ENCODE measurements at regions of chr12 and their contacts with region 1.

Region 1: GRCh38 chr12:49358483-49359141 is 8.7 kb upstream of the SPATS2 start:
- DNase-seq: peak; percentile 67
- H3K4me3 ChIP-seq: no peak overlapping the region
- H3K27ac ChIP-seq: no peak overlapping the region
- H3K4me1 ChIP-seq: no peaks in the 10 kb centered on the region
- H3K27me3 ChIP-seq: no peaks in the 10 kb centered on the region
- CTCF ChIP-seq: peak; percentile 70

Region 2: GRCh38 chr12:48973941-48974673 is 384.5 kb before region 1 on chr12:
- intact Hi-C with region 1: no loop called
- DNase-seq: peak; percentile 62
- H3K4me3 ChIP-seq: no peak overlapping the region
- H3K27ac ChIP-seq: no peak overlapping the region
- H3K4me1 ChIP-seq: peaks cover 29% of the 10 kb centered on the region
- H3K27me3 ChIP-seq: peaks cover 70% of the 10 kb centered on the region
- CTCF ChIP-seq: peak; percentile 61

Region 3: GRCh38 chr12:49515266-49515665 is 156.7 kb after region 1 on chr12:
- intact Hi-C with region 1: loop called (anchors 2 kb)
- DNase-seq: no peak
- H3K4me3 ChIP-seq: no peak overlapping the region
- H3K27ac ChIP-seq: no peak overlapping the region
- H3K4me1 ChIP-seq: no peaks in the 10 kb centered on the region
- H3K27me3 ChIP-seq: no peaks in the 10 kb centered on the region
- CTCF ChIP-seq: no peak

Region 4: GRCh38 chr12:49580572-49581535 is 222.2 kb after region 1 on chr12:
- intact Hi-C with region 1: loop called (anchors 10 kb)
- DNase-seq: peak; percentile 75
- H3K4me3 ChIP-seq: no peak overlapping the region
- H3K27ac ChIP-seq: no peak overlapping the region
- H3K4me1 ChIP-seq: no peaks in the 10 kb centered on the region
- H3K27me3 ChIP-seq: no peaks in the 10 kb centered on the region
- CTCF ChIP-seq: peak; percentile 60

Region 5: DNA sequence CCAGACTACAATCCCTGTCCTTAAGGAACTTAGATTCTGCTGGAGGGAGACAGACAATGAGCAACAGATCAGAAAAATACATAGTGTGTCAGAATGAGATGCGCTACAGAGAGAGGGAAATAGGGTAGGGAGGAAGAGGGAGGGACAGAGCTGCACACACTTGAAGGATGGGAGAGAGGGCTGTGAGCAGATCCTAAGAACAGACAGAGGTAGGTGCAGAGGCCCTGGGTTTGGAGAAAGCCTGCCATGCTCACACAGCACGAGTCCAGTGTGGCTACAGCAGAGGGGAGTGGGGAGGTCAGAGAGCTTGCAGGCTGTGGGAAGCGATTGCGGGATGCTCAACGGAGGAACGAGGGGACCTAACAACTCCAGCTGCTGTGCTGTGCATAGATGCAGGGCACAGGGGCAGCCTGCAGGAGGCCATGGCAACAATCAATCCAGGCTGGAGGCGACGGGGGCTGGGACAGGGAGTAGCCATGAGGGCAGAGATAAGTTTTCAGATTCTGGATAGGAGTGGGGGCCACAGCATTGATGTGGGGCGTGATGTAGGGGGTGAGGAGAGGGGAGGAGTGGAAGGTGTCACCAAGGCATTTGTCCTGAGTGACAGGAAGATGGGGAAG is 524.3 kb after region 1 on chr12:
- intact Hi-C with region 1: no loop called
- DNase-seq: no peak
- H3K4me3 ChIP-seq: no peak overlapping the region
- H3K27ac ChIP-seq: no peak overlapping the region
- H3K4me1 ChIP-seq: peaks cover 2% of the 10 kb centered on the region
- H3K27me3 ChIP-seq: no peaks in the 10 kb centered on the region
- CTCF ChIP-seq: no peak

Measured in colonic mucosa (tissue), 4 donors.